A549 (cell line): ENCODE measurements at regions of chr15 and their contacts with region 1.

Region 1: GRCh38 chr15:98647774-98648653 is at the start of gene IGF1R:
- DNase-seq: peak; percentile 79 to 92
- ATAC-seq: peak; percentile 51 to 55
- H3K4me3 ChIP-seq: peak within 1 kb of the TSS; percentile 84
- H3K27ac ChIP-seq: peak within 1 kb of the TSS; percentile 96 to 97
- H3K4me1 ChIP-seq: peaks cover 21% of the 10 kb centered on the region
- CTCF ChIP-seq: peak; percentile 4; the same call in 2 of the 3 replicates
- EP300 ChIP-seq: peak in 1 of 2 experiments; percentile 33; a peak in 1 of 5 replicates
- POLR2A ChIP-seq: no peak
- RAD21 ChIP-seq: no peak
- polyA plus RNA-seq, gene IGF1R: 69.5 and 117 TPM in 2 replicates

Region 2: DNA sequence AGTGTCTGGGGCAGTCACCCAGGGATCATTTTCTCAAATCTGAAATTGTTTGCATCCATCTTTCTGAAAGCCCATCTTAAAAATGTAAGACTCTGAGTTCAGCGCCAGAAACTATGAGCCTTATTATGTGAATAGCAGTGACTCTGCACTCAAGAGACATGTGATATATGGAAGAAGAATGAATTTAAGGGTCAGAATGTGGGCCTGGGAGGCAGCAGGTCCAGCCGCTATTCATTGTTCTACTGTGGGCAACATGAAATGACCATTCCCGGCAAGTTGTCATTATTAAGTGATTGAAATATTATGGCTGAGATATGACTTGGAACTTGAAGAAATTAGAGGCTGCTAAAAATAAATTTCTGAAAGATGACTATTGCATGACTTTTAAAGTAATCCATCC is 916.2 kb before region 1 on chr15:
- CTCF ChIA-PET with region 1: no interaction called
- POLR2A ChIA-PET with region 1: no interaction called
- DNase-seq: no peak
- ATAC-seq: no peak
- H3K4me3 ChIP-seq: no peak overlapping the region
- H3K27ac ChIP-seq: no peak overlapping the region
- H3K4me1 ChIP-seq: no peaks in the 10 kb centered on the region
- CTCF ChIP-seq: no peak
- EP300 ChIP-seq: no peak
- POLR2A ChIP-seq: no peak
- RAD21 ChIP-seq: no peak

Region 3: GRCh38 chr15:98554272-98555172 is 93.5 kb before region 1 on chr15:
- CTCF ChIA-PET with region 1: interaction called, 10 read pairs
- POLR2A ChIA-PET with region 1: no interaction called
- DNase-seq: no peak
- ATAC-seq: peak in 1 of 2 experiments; percentile 16; a peak in 2 of 6 replicates
- H3K4me3 ChIP-seq: no peak overlapping the region
- H3K27ac ChIP-seq: no peak overlapping the region
- H3K4me1 ChIP-seq: no peaks in the 10 kb centered on the region
- CTCF ChIP-seq: no peak
- EP300 ChIP-seq: no peak
- POLR2A ChIP-seq: no peak
- RAD21 ChIP-seq: no peak

Region 4: GRCh38 chr15:98635848-98636247 is 12.2 kb before region 1 on chr15:
- CTCF ChIA-PET with region 1: interaction called, 24 read pairs
- POLR2A ChIA-PET with region 1: no interaction called
- DNase-seq: no peak
- ATAC-seq: no peak
- H3K4me3 ChIP-seq: no peak overlapping the region
- H3K27ac ChIP-seq: no peak overlapping the region
- H3K4me1 ChIP-seq: no peaks in the 10 kb centered on the region
- CTCF ChIP-seq: no peak
- EP300 ChIP-seq: no peak
- POLR2A ChIP-seq: no peak
- RAD21 ChIP-seq: no peak

Region 5: DNA sequence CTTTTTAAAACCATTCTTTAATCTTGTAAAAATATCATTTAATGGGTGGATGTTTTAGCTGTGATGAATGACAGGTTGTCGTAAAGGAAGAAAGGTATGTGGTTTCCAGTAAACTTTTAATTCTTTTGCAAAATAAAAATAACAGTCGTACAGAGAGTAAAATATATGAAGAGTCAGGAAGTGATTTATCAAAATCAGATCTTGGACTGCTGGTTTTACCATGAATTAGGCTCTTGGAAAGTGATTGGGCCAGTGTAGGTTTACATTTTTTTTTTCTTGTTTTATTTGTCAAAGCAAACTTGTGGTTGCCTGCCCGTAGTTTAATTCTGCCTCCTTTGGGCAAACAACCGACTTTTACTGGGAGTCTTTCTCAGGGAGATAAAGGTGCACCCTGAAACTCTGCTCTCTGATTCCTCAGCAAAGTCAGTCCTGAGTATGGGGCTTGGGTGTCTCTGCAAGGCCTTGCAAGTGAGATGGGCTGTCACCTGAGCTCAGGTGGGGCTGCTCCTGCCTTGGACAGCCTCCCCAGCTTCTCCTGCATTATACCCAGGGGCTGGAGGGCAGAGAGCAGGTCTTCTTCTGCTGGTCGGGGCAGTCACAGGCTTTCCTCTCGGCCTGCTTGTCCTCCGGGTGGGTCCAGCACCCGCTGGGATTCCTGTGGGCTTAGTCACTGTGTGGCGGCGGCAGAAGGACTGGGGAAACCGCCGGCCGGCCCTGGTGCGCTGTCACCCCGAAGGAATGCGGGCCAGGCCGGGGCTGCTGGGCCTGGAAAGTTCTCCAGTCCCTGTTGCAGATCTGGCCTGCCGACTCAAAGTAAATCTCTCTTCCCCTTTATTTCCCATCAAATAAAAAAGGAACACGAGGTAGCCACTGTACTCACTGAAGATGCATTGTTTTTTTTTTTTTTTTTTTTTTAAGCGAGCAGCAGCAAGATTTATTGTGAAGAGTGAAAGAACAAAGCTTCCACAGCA is 79.4 kb after region 1 on chr15:
- CTCF ChIA-PET with region 1: interaction called, 11 read pairs
- POLR2A ChIA-PET with region 1: no interaction called
- DNase-seq: peak; percentile 93 to 98
- ATAC-seq: peak; percentile 96 to 98
- H3K4me3 ChIP-seq: peak overlapping the region; percentile 17; the same call in 2 of the 3 replicates
- H3K27ac ChIP-seq: peak overlapping the region; percentile 87 to 92
- H3K4me1 ChIP-seq: peaks cover 97% of the 10 kb centered on the region
- CTCF ChIP-seq: no peak
- EP300 ChIP-seq: peak in 1 of 2 experiments; percentile 43; a peak in 1 of 5 replicates
- POLR2A ChIP-seq: peak; percentile 21; the same call in 1 of the 2 replicates
- RAD21 ChIP-seq: 0 out of 5 replicates have a peak, but pooled peaks of 1 of the 2 experiments have one; percentile 11